ENCODE measurements at regions of chr10 and their contacts with region 1.

Region 1: DNA sequence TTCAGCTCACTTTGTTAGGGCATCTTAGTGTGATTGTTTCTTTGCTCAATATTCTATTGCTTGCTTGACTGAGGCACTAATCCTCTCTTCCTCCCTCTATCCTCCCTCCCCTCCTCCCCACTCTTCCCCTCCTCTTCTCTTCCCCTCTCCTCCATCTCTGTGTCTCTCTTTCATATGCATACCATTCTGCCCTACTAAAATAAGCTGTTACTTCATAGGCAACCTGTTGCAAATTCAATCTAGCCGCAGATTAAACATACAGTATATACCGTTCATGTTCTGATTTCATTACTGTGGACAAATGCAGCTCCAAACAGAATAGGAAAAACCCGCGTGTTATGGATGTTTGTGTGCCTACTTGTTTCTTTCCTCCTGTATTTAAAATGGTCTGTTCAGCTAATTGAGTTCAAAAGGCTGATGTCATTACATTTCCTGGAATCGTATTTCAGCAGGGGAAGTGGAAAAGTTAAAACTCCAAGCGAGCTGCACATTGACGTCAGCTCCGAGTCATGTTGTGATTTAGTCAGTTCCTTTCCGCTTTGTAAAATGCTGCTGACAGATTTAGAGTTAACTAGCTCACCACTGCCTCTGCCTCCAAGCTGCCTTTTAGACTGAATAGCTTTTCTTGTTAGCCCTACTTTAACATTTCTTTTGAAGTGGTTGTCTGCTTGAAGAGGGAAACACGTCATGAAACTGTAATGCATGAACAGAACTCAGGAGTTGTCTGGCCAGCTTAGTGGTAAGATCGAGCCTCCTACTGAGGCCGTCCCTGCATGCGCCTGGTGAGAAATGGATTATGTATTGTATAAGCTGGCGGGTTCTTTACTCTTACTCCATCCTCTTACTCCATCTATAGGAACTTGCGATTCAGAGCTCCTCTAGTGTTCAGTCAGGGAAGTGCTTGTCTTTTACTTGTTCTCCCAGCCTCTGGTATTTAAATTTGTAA is 69.0 kb downstream of the CREM start:
- DNase-seq: no peak
- H3K4me3 ChIP-seq: peak overlapping the region; percentile 31 to 62 (median 38); a peak in 7 of 8 replicates
- H3K27ac ChIP-seq: 0 out of 2 replicates have a peak overlapping the region, but pooled peaks have one; percentile 11
- H3K4me1 ChIP-seq: peaks cover 0 to 4% (median 2%) of the 10 kb centered on the region in 4 experiments; a peak in 3 of 7 replicates
- H3K27me3 ChIP-seq: no peaks in the 10 kb centered on the region
- CTCF ChIP-seq: peak in 2 of 3 experiments; percentile 67 to 68; a peak in 3 of 4 replicates
- EP300 ChIP-seq: no peak
- POLR2A ChIP-seq: peak in 1 of 2 experiments; percentile 39; a peak in 1 of 3 replicates
- RAD21 ChIP-seq: peak; percentile 60 to 63

Region 2: DNA sequence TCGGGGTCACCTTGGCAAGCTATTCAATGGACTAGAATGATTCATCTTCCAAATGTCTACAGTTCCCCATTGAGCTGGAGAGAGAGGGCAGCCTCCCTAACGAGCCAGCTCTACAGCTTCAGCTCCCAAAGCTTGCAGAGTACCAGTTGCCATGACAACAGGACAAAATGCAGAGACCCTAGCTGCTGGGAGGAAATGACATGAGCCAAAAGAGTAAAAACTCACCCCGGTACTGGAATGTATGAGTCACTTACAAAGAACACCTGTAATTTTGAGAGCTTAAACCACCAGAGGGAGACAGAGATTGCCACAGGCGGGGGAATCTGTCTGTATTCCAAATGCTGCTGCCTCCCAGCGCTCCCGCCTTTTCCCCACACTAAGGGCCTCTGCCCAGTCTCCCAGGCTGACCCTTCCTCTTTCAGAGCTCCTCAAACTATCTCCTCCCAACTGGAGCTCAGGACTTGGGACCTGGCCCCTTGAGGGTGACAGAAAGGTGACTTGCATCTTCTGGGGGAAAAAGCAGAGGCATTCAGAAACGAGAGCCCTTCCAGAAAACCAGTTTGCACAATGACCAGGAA is 201.0 kb before region 1 on chr10:
- CTCF ChIA-PET with region 1: interaction called, 11 read pairs
- POLR2A ChIA-PET with region 1: no interaction called
- DNase-seq: peak; percentile 75 to 77
- H3K4me3 ChIP-seq: no peak overlapping the region
- H3K27ac ChIP-seq: no peak overlapping the region
- H3K4me1 ChIP-seq: peaks cover 2 to 10% (median 5%) of the 10 kb centered on the region in 4 experiments; a peak in 4 of 7 replicates
- H3K27me3 ChIP-seq: no peaks in the 10 kb centered on the region; a peak in 1 of 7 replicates
- CTCF ChIP-seq: peak; percentile 36 to 87 (median 84)
- EP300 ChIP-seq: peak in 1 of 2 experiments; percentile 89; a peak in 2 of 3 replicates
- POLR2A ChIP-seq: no peak
- RAD21 ChIP-seq: peak; percentile 86 to 95

Region 3: DNA sequence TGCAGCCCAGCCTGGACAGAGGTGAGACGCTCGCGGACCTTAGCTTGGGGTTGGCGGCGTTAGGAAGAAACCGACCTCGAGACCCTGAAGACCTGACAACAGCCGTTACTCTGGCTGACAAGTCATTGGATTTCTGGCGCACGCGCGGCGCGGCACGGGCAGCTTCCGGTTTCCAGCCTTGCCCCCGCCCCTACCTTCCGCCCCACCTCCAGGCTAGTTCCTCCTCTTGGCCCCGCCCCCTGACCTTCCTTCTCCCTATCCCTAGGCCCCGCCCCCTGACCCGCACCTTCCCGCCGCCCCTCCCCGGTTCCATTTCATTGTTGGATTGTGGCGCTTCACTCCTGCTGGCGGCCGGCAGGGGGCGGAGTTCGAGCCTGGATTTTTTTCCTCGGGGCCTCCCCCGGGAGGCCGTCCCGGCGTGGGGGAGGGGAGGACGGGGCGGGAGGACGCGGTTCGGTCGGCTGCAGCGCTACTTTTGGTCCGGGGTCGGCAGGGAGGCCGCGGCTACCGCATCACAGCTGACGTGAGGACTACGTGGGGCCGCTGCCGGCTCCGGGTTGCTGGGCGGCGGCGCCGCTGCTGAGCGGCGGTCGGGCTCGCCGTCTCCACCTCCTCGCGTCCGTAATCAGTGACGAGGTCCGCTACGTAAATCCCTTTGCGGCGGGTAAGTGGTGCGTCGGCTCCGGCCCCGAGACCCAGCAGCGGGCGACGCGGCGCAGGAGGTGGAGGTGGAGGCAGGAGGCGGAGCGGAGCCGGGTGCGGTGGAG is 68.9 kb before region 1 on chr10 and contains the start of gene CREM:
- CTCF ChIA-PET with region 1: interaction called, 26 read pairs
- POLR2A ChIA-PET with region 1: interaction called, 14 read pairs
- DNase-seq: peak; percentile 93 to 99
- H3K4me3 ChIP-seq: peak within 1 kb of the TSS; percentile 59 to 87 (median 81)
- H3K27ac ChIP-seq: peak within 1 kb of the TSS; percentile 91
- H3K4me1 ChIP-seq: peaks cover 0 to 3% (median 0%) of the 10 kb centered on the region in 4 experiments; a peak in 2 of 7 replicates
- H3K27me3 ChIP-seq: no peaks in the 10 kb centered on the region; a peak in 1 of 7 replicates
- CTCF ChIP-seq: peak; percentile 55 to 84 (median 75)
- EP300 ChIP-seq: peak in 1 of 2 experiments; percentile 56; a peak in 1 of 3 replicates
- POLR2A ChIP-seq: peak; percentile 70 to 94
- RAD21 ChIP-seq: peak; percentile 44 to 65
- total RNA-seq, gene CREM: 21.9 and 24.4 TPM in 2 replicates

Region 4: GRCh38 chr10:35178331-35178730 is 17.3 kb before region 1 on chr10:
- CTCF ChIA-PET with region 1: interaction called, 22 read pairs
- POLR2A ChIA-PET with region 1: no interaction called
- DNase-seq: no peak
- H3K4me3 ChIP-seq: no peak overlapping the region
- H3K27ac ChIP-seq: no peak overlapping the region
- H3K4me1 ChIP-seq: no peaks in the 10 kb centered on the region
- H3K27me3 ChIP-seq: no peaks in the 10 kb centered on the region
- CTCF ChIP-seq: no peak
- EP300 ChIP-seq: no peak
- POLR2A ChIP-seq: no peak
- RAD21 ChIP-seq: no peak

Region 5: DNA sequence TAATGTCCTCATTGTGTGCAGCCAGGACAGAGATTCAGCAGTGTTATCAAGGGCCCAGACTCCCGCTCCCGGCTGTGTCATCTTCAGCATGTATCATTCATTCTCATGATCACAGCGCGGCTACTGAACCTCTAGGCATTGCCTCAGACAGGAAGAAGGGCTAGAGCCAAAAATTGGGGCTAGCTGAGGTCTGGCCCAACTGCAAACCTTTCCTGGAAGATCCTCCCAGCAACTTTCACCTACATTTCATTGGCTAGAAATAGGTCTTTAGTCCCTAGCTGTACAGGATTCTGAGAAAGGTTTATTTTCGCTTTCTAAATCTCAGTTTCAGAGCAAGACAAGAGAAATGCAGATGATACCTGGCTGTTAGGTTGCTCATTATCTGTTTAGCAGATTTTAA is 12.9 kb after region 1 on chr10:
- CTCF ChIA-PET with region 1: interaction called, 29 read pairs
- POLR2A ChIA-PET with region 1: interaction called, 3 read pairs
- DNase-seq: no peak
- H3K4me3 ChIP-seq: no peak overlapping the region
- H3K27ac ChIP-seq: no peak overlapping the region
- H3K4me1 ChIP-seq: peaks cover 2 to 12% (median 6%) of the 10 kb centered on the region in 4 experiments; a peak in 5 of 7 replicates
- H3K27me3 ChIP-seq: peaks cover 0 to under 1% (median 0%) of the 10 kb centered on the region in 4 experiments; a peak in 1 of 7 replicates
- CTCF ChIP-seq: no peak
- EP300 ChIP-seq: no peak
- POLR2A ChIP-seq: no peak
- RAD21 ChIP-seq: no peak

Region 6: GRCh38 chr10:35336921-35337823 is 141.5 kb after region 1 on chr10:
- CTCF ChIA-PET with region 1: no interaction called
- POLR2A ChIA-PET with region 1: no interaction called
- DNase-seq: peak in 1 of 2 experiments; percentile 73
- H3K4me3 ChIP-seq: peak overlapping the region; percentile 73 to 98 (median 85)
- H3K27ac ChIP-seq: no peak overlapping the region
- H3K4me1 ChIP-seq: peaks cover 0 to 5% (median 2%) of the 10 kb centered on the region in 4 experiments; a peak in 3 of 7 replicates
- H3K27me3 ChIP-seq: no peaks in the 10 kb centered on the region
- CTCF ChIP-seq: no peak
- EP300 ChIP-seq: no peak
- POLR2A ChIP-seq: no peak
- RAD21 ChIP-seq: no peak